Dendritic cell treated with granulocyte-macrophage colony-stimulating factor and Interleukin-4, amounts not matched to agents 40 ng/mL and 50 ng/mL, for 4 days (primary cell): ENCODE measurements at regions of chr3 and their contacts with region 1.

Region 1: GRCh38 chr3:69739204-69740102 is at the start of gene MITF:
- H3K4me3 Mint-ChIP-seq: peak within 1 kb of the TSS; percentile 90
- H3K27ac Mint-ChIP-seq: peak within 1 kb of the TSS; percentile 90
- H3K4me1 Mint-ChIP-seq: peaks cover 46% of the 10 kb centered on the region
- H3K27me3 Mint-ChIP-seq: no peaks in the 10 kb centered on the region

Region 2: GRCh38 chr3:69776920-69777581 is 37.6 kb after region 1 on chr3:
- intact Hi-C with region 1: loop called (anchors 5 kb)
- H3K4me3 Mint-ChIP-seq: peak overlapping the region; percentile 17
- H3K27ac Mint-ChIP-seq: peak overlapping the region; percentile 61
- H3K4me1 Mint-ChIP-seq: peaks cover 38% of the 10 kb centered on the region
- H3K27me3 Mint-ChIP-seq: no peaks in the 10 kb centered on the region

Region 3: GRCh38 chr3:70090322-70090913 is 351.0 kb after region 1 on chr3:
- intact Hi-C with region 1: no loop called
- H3K4me3 Mint-ChIP-seq: no peak overlapping the region
- H3K27ac Mint-ChIP-seq: no peak overlapping the region
- H3K4me1 Mint-ChIP-seq: no peaks in the 10 kb centered on the region
- H3K27me3 Mint-ChIP-seq: peaks cover 2% of the 10 kb centered on the region